ENCODE measurements at regions of chr3 and their contacts with region 1.

Region 1: DNA sequence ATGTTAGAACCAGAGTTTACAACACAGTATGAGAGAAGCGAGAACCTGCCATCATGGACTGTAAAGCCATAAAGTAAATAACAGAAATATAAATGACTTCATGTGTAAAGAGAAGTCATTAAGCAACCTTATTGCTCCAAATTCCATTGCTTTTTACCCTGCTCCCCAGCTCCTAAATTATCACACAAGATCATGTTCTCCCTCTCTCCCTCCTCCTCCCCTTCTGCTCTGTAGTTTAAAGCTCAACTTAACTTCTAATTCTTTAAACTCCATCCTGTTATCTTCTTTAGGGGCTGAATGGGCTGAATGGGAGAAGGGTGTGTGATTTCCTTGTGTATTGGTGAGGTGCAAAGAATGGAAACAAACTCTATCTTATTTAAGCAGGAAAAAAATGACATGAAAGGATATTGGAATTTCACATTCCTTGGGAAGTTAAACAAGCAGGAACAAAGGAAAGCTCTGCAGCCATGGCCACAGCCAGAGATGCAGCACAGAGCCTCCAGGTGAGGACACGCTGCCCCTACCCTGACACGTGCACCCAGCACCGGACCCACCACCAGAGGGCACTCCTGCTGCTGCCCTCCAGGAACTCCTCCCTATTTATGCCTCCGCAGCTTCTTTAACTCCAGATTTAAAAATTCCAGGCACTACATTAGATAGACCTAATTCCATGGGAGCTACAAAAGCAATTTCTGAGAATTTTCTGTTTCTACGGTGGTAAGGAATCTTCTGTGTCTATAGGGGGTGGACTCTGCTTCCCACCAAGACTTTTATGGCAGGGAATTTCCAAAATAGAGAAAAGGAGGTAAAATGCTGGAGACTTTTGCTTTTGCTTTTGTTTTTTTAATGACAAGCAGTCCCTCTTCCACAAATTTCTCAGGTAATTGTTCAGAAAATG is 76.9 kb upstream of the ABI3BP start:
- DNase-seq: peak; percentile 17 to 67
- ATAC-seq: peak in 7 of 8 donors; percentile 16 to 84 (median 67)
- H3K4me3 ChIP-seq: no peak overlapping the region
- H3K27ac ChIP-seq: no peak overlapping the region
- H3K4me1 ChIP-seq: peaks cover 0 to 17% (median 5%) of the 10 kb centered on the region in 9 donors
- H3K27me3 ChIP-seq: no peaks in the 10 kb centered on the region
- CTCF ChIP-seq: peak; percentile 34 to 74 (median 67)

Region 2: DNA sequence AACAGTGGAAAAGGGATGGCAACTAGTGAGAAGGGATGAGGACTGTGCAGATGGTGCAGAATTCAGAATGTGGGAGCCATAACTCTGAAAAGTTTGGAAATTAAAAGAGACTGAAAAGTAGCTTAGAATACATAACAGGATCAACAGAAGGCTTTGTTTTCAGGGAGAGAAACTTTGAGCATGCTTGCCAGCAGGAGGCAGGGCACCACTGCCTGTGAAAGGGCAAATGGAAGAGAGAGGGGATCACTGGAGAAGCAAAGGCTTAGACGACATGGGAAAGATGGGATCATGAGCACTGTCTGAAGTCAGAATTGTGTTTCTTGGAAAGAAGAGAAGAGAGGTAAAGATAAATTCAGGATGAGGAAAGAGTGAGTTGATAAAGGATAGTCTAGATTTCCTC is 176.6 kb before region 1 on chr3:
- intact Hi-C with region 1: loop called in 1 of 10 experiments (anchors 10 kb)
- DNase-seq: peak in 1 of 2 donors; percentile 19
- ATAC-seq: peak in 2 of 8 donors; percentile 52 to 66
- H3K4me3 ChIP-seq: no peak overlapping the region
- H3K27ac ChIP-seq: peak overlapping the region in 1 of 10 donors; percentile 71
- H3K4me1 ChIP-seq: peaks cover 0 to 4% (median 0%) of the 10 kb centered on the region in 9 donors
- H3K27me3 ChIP-seq: no peaks in the 10 kb centered on the region
- CTCF ChIP-seq: peak in 8 of 9 donors; percentile 24 to 57 (median 48)

Region 3: DNA sequence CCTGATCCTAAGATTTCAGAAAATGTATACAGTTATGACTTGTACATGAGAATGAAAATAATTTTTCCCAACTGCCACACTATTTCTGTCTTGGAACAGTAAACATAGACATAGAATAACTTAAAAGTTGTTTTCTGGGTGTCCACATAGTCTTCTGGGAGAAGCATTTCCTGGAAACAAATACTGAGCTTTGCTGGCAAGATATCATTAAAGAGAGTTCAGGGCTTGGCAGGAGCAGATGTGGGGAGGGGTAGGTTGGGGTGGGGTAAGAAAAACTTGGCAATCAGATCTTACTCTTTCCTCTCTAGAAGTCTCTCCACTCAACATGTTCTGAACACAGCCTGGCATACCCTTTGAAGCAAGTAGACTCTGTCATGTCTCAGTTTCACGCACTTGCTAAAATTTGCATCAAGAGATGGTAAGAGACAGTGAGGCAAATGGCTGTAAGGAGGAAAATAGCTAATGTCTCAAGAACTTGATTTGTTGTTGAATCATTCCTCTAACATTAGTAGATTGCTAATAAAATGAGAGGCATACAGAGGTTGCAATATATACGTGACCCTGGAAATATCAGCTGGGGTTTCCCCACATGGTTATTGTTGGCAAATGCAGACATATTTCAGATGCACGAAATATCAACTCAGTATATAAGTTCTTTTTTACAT is 49.7 kb before region 1 on chr3:
- intact Hi-C with region 1: loop called in 1 of 10 experiments (anchors 5 kb)
- DNase-seq: no peak
- ATAC-seq: no peak
- H3K4me3 ChIP-seq: no peak overlapping the region
- H3K27ac ChIP-seq: no peak overlapping the region
- H3K4me1 ChIP-seq: peaks cover 0 to 3% (median 0%) of the 10 kb centered on the region in 9 donors
- H3K27me3 ChIP-seq: no peaks in the 10 kb centered on the region
- CTCF ChIP-seq: no peak

Region 4: GRCh38 chr3:101155825-101156224 is 85.7 kb after region 1 on chr3:
- intact Hi-C with region 1: no loop called
- DNase-seq: peak in 1 of 2 donors; percentile 45
- ATAC-seq: peak; percentile 86 to 99 (median 96)
- H3K4me3 ChIP-seq: no peak overlapping the region
- H3K27ac ChIP-seq: peak overlapping the region in 2 of 10 donors; percentile 25 to 28
- H3K4me1 ChIP-seq: peaks cover 0 to 21% (median 5%) of the 10 kb centered on the region in 9 donors
- H3K27me3 ChIP-seq: no peaks in the 10 kb centered on the region
- CTCF ChIP-seq: no peak

Region 5: DNA sequence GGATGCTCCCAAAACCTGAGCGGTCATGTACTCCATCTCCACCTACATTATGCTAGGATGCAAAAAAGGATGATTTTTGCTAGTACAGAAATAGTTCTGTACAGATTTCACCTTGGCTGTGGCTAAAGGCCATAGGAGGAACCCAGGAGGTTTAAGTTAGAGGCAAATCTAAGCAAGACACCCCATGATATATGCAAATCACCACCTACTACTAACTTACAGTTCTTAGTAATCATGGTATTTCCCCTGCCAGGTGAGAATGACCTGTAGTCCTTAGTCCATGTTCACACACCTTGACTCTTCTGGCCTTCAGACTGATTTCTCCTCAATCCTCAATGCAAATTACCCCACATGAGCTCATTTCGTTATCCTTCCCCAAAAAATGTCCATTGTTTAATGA is 96.0 kb after region 1 on chr3:
- intact Hi-C with region 1: no loop called
- DNase-seq: no peak
- ATAC-seq: no peak
- H3K4me3 ChIP-seq: no peak overlapping the region
- H3K27ac ChIP-seq: no peak overlapping the region
- H3K4me1 ChIP-seq: peaks cover 0 to 17% (median 7%) of the 10 kb centered on the region in 9 donors
- H3K27me3 ChIP-seq: no peaks in the 10 kb centered on the region
- CTCF ChIP-seq: no peak

Region 6: GRCh38 chr3:101179637-101180036 is 109.5 kb after region 1 on chr3:
- intact Hi-C with region 1: loop called in 1 of 10 experiments (anchors 10 kb)
- DNase-seq: no peak
- ATAC-seq: peak in 2 of 8 donors; percentile 50 to 70
- H3K4me3 ChIP-seq: no peak overlapping the region
- H3K27ac ChIP-seq: no peak overlapping the region
- H3K4me1 ChIP-seq: no peaks in the 10 kb centered on the region
- H3K27me3 ChIP-seq: no peaks in the 10 kb centered on the region
- CTCF ChIP-seq: no peak

Region 7: DNA sequence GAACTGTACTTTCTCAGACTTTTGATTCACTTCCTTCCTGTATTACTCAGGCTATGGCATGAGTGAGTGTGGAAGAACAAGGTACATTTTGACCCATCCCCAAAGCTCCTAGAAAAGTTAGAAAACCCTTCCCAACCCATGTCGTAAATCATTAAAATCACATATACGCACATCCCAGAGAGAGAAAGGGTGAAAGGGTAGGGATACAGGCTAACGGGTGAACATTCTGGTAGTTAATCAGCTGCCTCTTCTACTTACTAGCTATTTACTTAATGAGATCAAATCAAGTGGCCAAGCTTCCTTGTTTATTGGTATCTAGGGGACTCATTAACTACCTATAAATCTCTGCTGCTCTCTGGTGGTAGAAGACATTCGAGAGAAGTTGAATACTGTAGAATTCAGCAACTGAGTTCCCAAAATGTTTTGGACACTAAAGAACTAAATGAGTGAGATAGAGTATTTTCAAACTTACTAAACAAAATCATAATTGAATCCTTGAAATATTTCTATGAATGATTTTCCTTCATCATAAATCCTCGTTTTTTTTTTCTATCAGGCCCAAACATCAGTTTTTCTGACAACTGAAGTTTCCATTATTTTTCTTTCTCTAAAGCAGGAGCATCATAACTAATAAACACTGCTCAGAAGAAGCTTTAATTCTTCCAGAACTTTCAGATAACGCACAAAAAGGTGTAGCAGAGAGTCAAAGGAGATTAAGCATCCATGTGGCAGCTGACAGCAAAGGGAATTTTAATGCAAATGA is 126.0 kb after region 1 on chr3:
- intact Hi-C with region 1: loop called in 7 of 10 experiments (anchors 1 to 5 kb)
- DNase-seq: peak in 1 of 2 donors; percentile 10
- ATAC-seq: peak in 7 of 8 donors; percentile 63 to 87 (median 78)
- H3K4me3 ChIP-seq: no peak overlapping the region
- H3K27ac ChIP-seq: no peak overlapping the region
- H3K4me1 ChIP-seq: peaks cover 0 to 4% (median 0%) of the 10 kb centered on the region in 9 donors
- H3K27me3 ChIP-seq: no peaks in the 10 kb centered on the region
- CTCF ChIP-seq: peak; percentile 11 to 77 (median 62)

Region 8: GRCh38 chr3:101381809-101382208 is 311.7 kb after region 1 on chr3:
- intact Hi-C with region 1: loop called in 1 of 10 experiments (anchors 10 kb)
- DNase-seq: no peak
- ATAC-seq: peak in 3 of 8 donors; percentile 31 to 47 (median 35)
- H3K4me3 ChIP-seq: no peak overlapping the region
- H3K27ac ChIP-seq: peak overlapping the region in 1 of 10 donors; percentile 32
- H3K4me1 ChIP-seq: peaks cover 5 to 46% (median 31%) of the 10 kb centered on the region in 9 donors
- H3K27me3 ChIP-seq: no peaks in the 10 kb centered on the region
- CTCF ChIP-seq: peak; percentile 18 to 66 (median 55)

Measured in heart right ventricle (tissue), 16 donors.